BJ (cell line): ENCODE measurements at regions of chr18 and their contacts with region 1.

Region 1: DNA sequence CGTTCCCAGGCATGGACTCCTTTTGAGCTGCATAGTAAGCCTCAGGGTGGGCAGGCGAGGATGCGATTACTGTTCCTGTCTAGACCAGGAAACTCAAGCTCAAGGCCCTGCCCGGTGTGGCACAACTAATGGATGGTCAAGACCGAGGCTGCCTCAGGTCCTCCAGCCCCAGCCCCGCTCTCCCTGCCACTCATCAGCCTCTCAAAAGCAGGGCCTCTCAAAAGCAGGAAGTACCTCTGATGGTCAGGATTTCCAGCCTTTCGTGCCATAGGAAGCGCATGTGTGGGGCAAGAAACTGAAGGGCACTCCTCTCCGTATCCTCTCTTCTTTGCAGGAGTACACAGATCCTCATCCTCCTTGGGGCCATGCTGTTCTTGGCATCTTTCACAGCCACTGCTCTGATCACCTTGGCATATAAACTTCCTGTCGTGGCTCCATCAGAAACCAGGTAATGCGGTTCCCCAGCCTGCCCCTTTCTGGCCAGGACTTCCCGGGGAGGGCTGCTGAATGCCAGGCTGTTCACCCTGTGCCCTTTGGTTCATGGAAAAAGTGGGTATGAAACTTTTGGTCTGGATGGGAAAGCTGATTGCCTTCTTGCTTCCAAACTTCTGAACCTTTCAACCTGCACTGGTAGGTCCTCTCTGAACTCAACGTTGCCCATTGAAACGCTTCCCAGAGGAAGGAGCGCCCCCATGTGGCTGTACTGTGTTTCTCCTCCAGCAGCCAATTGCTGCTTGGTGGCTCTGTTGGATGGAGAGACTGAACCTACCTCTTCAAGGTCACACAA is 82.8 kb upstream of the SEC11C start:
- DNase-seq: no peak
- H3K4me3 ChIP-seq: no peak overlapping the region
- H3K27me3 ChIP-seq: peaks cover 2% of the 10 kb centered on the region
- CTCF ChIP-seq: peak; percentile 82

Region 2: DNA sequence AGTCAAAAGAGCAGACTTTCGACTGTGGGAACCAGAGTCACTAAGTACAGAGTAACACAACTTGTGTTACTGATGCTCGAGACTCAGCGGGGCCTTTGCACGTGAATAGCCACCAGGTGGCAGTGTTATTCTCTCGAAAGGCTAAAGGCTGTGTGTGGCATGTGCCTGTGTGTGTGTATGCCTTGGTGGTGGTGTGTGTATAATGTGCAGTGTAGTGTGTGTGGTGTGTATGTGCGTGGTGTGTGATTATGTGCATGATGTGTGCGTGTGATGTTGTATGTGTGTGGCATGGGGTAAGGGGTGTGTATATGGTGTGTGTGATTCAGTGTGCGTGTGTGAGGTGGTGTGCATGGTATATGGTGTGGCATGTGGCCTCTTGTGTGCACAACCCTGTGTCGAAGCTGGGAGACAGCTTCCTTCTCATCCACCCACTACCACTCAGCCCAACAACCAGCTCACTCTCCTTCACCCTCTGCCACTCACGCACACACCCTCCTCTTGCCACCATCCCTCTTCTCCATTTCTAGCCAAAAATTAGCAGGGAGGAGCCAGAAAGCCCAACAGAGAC is 275.2 kb before region 1 on chr18:
- CTCF ChIA-PET with region 1: interaction called, 703 read pairs
- POLR2A ChIA-PET with region 1: no interaction called
- DNase-seq: no peak
- H3K4me3 ChIP-seq: no peak overlapping the region
- H3K27me3 ChIP-seq: no peaks in the 10 kb centered on the region
- CTCF ChIP-seq: peak; percentile 80

Region 3: DNA sequence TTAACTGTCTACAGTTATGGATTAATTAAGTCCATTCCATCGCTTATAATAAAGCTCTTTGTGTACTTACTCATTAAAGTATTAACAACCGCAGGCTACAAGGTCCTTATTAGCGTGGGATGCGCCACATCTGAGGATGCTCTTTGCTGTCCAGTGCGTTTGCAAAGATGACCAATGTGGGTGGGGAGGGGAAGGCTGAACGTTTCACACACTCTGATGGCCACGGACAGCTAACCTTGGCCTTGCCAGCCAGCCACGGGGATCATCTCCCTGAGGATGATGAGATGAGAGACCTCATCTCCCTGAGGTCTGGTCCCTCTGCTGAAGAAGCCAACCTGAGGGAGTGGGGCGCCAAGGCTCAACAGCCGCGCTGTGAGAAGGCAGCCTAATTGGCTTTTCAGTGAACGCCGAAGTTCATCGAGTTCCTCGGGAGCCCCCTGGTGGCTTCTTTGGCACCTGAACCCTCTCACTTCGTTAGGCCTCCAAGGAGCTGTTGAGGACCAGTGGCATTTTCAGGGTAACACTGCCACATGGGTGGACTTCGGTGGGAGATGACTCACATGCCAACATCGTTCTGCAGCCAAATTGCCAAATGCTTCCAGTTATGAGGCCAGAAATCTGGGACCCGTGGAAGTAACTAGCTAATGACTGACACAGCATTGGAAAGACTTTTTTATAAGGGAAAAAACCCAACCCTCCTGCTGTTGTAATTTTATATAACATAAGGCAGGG is 13.4 kb after region 1 on chr18:
- CTCF ChIA-PET with region 1: interaction called, 37 read pairs
- POLR2A ChIA-PET with region 1: no interaction called
- DNase-seq: no peak
- H3K4me3 ChIP-seq: no peak overlapping the region
- H3K27me3 ChIP-seq: no peaks in the 10 kb centered on the region
- CTCF ChIP-seq: peak; percentile 89